Activated CD4-positive, alpha-beta T cell treated with anti-CD3 and anti-CD28 coated beads, Interleukin-2, amount 10 ng/mL, durations not matched to agents 24 days and 14 days (primary cell): ENCODE measurements at regions of chr16 and their contacts with region 1.

Region 1: DNA sequence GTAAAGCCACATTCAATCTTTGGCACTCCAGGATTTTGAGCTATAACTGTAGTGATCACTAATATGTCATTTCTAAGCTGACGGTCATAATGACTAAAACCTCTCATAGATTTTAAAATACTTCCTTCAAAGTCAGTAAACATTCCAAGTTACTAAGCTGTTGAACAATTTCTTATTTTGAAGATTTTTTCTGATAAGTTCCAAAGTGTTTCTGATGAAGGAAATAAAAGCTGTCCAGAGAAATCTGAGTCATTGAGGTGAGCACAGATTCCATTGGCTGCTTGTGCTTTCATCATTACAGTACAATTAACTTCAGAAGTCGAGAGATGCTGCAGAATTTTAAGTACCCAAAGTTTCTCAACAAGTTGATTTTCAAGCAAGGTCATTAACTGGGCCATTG is 23.9 kb downstream of the NLRC5 start:
- DNase-seq: no peak
- H3K4me3 Mint-ChIP-seq: peak overlapping the region; percentile 79
- H3K27ac Mint-ChIP-seq: peak overlapping the region; percentile 98
- H3K4me1 Mint-ChIP-seq: peaks cover 66% of the 10 kb centered on the region
- H3K27me3 Mint-ChIP-seq: no peaks in the 10 kb centered on the region

Region 2: DNA sequence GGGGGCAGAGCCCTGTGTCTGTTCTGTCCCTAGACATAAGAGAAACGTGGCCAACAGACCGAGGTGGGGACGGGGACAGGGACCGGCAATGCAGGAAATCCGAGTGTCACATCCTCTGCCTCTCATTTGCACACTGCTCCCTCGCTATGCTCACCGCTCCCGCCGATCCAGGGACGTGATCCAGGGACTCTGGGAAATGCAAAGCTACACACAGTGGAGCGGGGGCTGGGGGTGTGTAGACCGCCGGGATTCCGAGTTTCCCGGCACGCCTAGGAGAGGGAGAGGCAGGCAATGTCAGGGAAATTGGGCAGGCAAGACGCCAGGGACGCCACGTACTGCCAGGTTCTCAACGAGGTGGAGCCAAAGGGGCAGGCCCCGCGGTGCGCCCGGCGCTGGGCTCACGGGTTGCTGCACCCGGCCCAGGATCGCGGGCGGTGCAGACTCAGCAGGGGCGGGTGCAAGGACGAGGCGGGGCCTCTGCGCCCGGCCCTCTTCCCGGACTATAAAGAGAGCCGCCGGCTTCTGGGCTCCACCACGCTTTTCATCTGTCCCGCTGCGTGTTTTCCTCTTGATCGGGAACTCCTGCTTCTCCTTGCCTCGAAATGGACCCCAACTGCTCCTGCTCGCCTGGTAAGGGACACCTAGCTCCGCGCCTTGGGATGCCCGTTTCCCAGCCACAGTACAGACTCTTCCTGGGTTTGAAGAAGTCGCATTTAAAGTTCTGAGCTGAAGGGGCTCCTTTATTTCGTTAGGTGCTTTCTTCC is 331.1 kb before region 1 on chr16 and contains the start of gene MT1X:
- intact Hi-C with region 1: no loop called
- DNase-seq: peak; percentile 97
- H3K4me3 Mint-ChIP-seq: peak within 1 kb of the TSS; percentile 94
- H3K27ac Mint-ChIP-seq: peak within 1 kb of the TSS; percentile 93
- H3K4me1 Mint-ChIP-seq: peaks cover 21% of the 10 kb centered on the region
- H3K27me3 Mint-ChIP-seq: no peaks in the 10 kb centered on the region
- total RNA-seq, gene MT1X: 62.7 and 66.9 TPM in 2 replicates

Region 3: GRCh38 chr16:56944954-56945839 is 68.0 kb before region 1 on chr16:
- intact Hi-C with region 1: loop called (anchors 2 kb)
- DNase-seq: no peak
- H3K4me3 Mint-ChIP-seq: peak overlapping the region; percentile 23
- H3K27ac Mint-ChIP-seq: peak overlapping the region; percentile 92
- H3K4me1 Mint-ChIP-seq: peaks cover 39% of the 10 kb centered on the region
- H3K27me3 Mint-ChIP-seq: no peaks in the 10 kb centered on the region

Region 4: GRCh38 chr16:56964243-56965148 is 48.7 kb before region 1 on chr16:
- intact Hi-C with region 1: loop called (anchors 2 kb)
- DNase-seq: peak; percentile 99
- H3K4me3 Mint-ChIP-seq: no peak overlapping the region
- H3K27ac Mint-ChIP-seq: peak overlapping the region; percentile 14
- H3K4me1 Mint-ChIP-seq: peaks cover 19% of the 10 kb centered on the region
- H3K27me3 Mint-ChIP-seq: peaks cover 1% of the 10 kb centered on the region

Region 5: DNA sequence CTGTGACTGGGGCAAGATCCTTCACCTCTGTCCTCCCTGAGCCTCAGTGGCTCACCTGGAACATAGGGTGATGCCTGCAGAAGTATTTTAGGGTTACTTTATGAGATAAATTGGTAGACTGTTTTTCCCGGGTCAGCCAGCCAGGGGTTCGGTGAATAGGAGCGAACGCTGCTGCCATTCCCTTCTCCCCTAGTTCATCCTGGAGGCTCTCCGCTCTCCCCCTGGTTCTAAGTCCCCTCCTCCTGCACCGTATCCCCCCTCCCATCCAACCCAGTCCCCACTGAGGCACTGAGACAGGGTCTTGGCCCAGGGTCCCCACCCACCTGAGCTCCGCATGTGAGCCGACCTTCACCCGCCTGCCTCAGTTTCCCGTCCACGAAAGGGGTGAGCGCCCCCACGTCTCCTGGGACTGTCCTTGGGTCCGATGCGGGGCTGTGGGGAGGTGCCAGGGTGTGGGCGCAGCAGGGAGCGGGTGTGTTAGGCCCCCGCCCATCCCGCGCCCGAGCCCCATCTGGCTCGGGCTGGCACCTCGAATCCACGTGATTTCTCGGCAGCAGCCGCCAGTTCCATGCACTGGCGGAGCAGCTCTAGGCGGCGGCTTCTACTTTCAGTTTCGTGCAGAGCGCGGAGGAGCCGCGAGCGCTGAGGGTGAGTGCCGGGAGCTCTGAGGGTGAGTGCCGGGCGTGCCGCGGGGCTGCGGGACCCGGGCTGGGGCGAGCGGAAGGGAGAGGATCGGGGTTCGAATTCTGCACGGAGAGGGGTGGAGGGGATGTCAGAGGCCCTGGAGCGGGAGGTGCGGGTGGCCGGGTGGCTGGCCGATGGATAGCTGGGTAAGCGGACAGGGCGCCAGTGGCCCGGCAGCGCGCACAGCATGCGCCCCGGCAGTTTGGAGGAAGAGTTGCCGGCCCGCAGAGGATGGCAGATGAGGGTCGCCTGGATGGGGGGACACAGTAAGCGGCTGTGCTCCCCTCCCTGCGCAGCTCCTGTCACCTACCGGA is 24.0 kb before region 1 on chr16 and contains the start of gene NLRC5:
- intact Hi-C with region 1: loop called (anchors 1 kb)
- DNase-seq: peak; percentile 98
- H3K4me3 Mint-ChIP-seq: peak within 1 kb of the TSS; percentile 97
- H3K27ac Mint-ChIP-seq: peak within 1 kb of the TSS; percentile 99
- H3K4me1 Mint-ChIP-seq: peaks cover 74% of the 10 kb centered on the region
- H3K27me3 Mint-ChIP-seq: no peaks in the 10 kb centered on the region
- total RNA-seq, gene NLRC5: 208 and 214 TPM in 2 replicates

Region 6: GRCh38 chr16:57000271-57001025 is 12.8 kb before region 1 on chr16:
- intact Hi-C with region 1: loop called (anchors 1 kb)
- DNase-seq: peak; percentile 74
- H3K4me3 Mint-ChIP-seq: peak overlapping the region; percentile 75
- H3K27ac Mint-ChIP-seq: peak overlapping the region; percentile 97
- H3K4me1 Mint-ChIP-seq: peaks cover 74% of the 10 kb centered on the region
- H3K27me3 Mint-ChIP-seq: no peaks in the 10 kb centered on the region

Region 7: GRCh38 chr16:57042157-57043111 is 29.2 kb after region 1 on chr16:
- intact Hi-C with region 1: loop called (anchors 1 kb)
- DNase-seq: peak; percentile 88
- H3K4me3 Mint-ChIP-seq: peak overlapping the region; percentile 80
- H3K27ac Mint-ChIP-seq: peak overlapping the region; percentile 97
- H3K4me1 Mint-ChIP-seq: peaks cover 62% of the 10 kb centered on the region
- H3K27me3 Mint-ChIP-seq: no peaks in the 10 kb centered on the region

Region 8: GRCh38 chr16:57535680-57536305 is 522.6 kb after region 1 on chr16:
- intact Hi-C with region 1: loop called (anchors 10 kb)
- DNase-seq: peak; percentile 98
- H3K4me3 Mint-ChIP-seq: peak overlapping the region; percentile 86
- H3K27ac Mint-ChIP-seq: peak overlapping the region; percentile 89
- H3K4me1 Mint-ChIP-seq: peaks cover 63% of the 10 kb centered on the region
- H3K27me3 Mint-ChIP-seq: no peaks in the 10 kb centered on the region